ENCODE measurements at regions of chr2 and their contacts with region 1.

Region 1: DNA sequence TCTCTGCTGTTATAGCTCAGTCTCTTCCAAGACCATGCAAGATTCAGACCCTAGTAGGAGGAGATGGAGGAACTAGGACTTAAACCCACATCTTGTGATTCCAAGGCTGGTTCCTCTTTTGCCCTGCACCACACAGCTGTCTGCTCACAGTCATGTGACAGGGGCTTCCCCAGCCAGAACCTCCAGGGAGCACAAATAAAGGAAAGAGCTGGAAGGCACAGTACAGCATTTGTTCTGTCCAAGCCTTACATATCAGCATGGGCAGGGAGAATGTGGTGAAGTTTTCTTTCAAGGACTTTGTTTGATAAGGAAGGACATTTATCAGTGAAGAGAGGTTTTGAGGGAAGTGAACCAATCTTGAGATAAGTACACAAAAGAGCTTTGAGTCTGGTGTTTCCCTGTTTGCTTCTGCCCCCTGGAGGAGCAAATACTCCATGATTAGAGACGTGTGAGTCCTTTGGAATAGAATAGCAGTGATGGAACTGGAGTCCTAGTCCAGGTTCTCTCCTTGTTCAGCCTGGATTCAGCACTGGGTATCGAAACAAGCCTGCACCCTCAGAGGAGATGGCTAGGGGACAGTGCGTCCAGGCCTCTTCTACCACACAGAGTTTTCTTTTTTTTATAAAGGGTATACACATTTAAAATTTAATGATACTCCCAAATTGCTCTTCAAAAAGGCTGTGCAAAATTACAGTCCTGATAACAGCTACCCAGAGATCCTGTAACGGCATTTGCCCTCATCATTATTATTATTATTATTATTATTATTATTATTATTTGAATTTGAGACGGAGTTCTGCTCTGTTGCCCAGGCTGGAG is 24.6 kb upstream of the CASP10 start:
- DNase-seq: peak in 1 of 2 donors; percentile 85
- ATAC-seq: peak; percentile 84
- H3K4me3 ChIP-seq: no peak overlapping the region
- H3K27ac ChIP-seq: peak overlapping the region in 1 of 2 donors; percentile 23
- H3K4me1 ChIP-seq: no peaks in the 10 kb centered on the region
- H3K27me3 ChIP-seq: no peaks in the 10 kb centered on the region

Region 2: GRCh38 chr2:201118121-201118960 is 40.0 kb before region 1 on chr2:
- intact Hi-C with region 1: loop called in 1 of 2 experiments (anchors 5 kb)
- DNase-seq: peak; percentile 93 to 94
- ATAC-seq: peak; percentile 78
- H3K4me3 ChIP-seq: peak overlapping the region; percentile 57 to 61
- H3K27ac ChIP-seq: peak overlapping the region in 1 of 2 donors; percentile 53
- H3K4me1 ChIP-seq: peaks cover 0 to 2% of the 10 kb centered on the region in 2 donors
- H3K27me3 ChIP-seq: no peaks in the 10 kb centered on the region

Measured in aorta (tissue), 5 donors.